ENCODE measurements at regions of chr10 and their contacts with region 1.

Region 1: GRCh38 chr10:122298598-122299301 is 27.7 kb downstream of the BTBD16 start:
- DNase-seq: peak; percentile 71 to 80
- ATAC-seq: peak; percentile 80 to 95 (median 86)
- H3K4me3 ChIP-seq: no peak overlapping the region
- H3K27ac ChIP-seq: no peak overlapping the region
- H3K4me1 ChIP-seq: peaks cover 3% of the 10 kb centered on the region
- H3K27me3 ChIP-seq: peaks cover 0 to 1% (median 0%) of the 10 kb centered on the region in 3 donors
- CTCF ChIP-seq: peak; percentile 91

Region 2: GRCh38 chr10:122342293-122343134 is 43.8 kb after region 1 on chr10:
- intact Hi-C with region 1: loop called in 1 of 2 experiments (anchors 5 kb)
- DNase-seq: no peak
- ATAC-seq: peak; percentile 42 to 72 (median 52)
- H3K4me3 ChIP-seq: no peak overlapping the region
- H3K27ac ChIP-seq: no peak overlapping the region
- H3K4me1 ChIP-seq: peaks cover 8% of the 10 kb centered on the region
- H3K27me3 ChIP-seq: no peaks in the 10 kb centered on the region
- CTCF ChIP-seq: peak; percentile 73

Region 3: GRCh38 chr10:122703439-122704118 is 404.8 kb after region 1 on chr10:
- intact Hi-C with region 1: loop called in 1 of 2 experiments (anchors 5 kb)
- DNase-seq: peak; percentile 47 to 82
- ATAC-seq: peak; percentile 83 to 89 (median 86)
- H3K4me3 ChIP-seq: no peak overlapping the region
- H3K27ac ChIP-seq: no peak overlapping the region
- H3K4me1 ChIP-seq: no peaks in the 10 kb centered on the region
- H3K27me3 ChIP-seq: peaks cover 0 to 4% (median 0%) of the 10 kb centered on the region in 3 donors
- CTCF ChIP-seq: peak; percentile 85

Measured in psoas muscle (tissue), 8 donors.